PC-3 (cell line): ENCODE measurements at regions of chr3 and their contacts with region 1.

Region 1: GRCh38 chr3:106635271-106635670 is 742.0 kb upstream of the CCDC54 start:
- DNase-seq: peak; percentile 37
- ATAC-seq: no peak
- H3K4me3 ChIP-seq: no peak overlapping the region
- H3K27ac ChIP-seq: no peak overlapping the region
- H3K4me1 ChIP-seq: no peaks in the 10 kb centered on the region
- H3K27me3 ChIP-seq: no peaks in the 10 kb centered on the region
- CTCF ChIP-seq: no peak

Region 2: GRCh38 chr3:106728315-106729098 is 93.2 kb after region 1 on chr3:
- CTCF ChIA-PET with region 1: no interaction called
- POLR2A ChIA-PET with region 1: no interaction called
- intact Hi-C with region 1: loop called (anchors 10 kb)
- DNase-seq: peak; percentile 98
- ATAC-seq: peak; percentile 98
- H3K4me3 ChIP-seq: peak overlapping the region; percentile 55
- H3K27ac ChIP-seq: peak overlapping the region; percentile 75
- H3K4me1 ChIP-seq: peaks cover 27% of the 10 kb centered on the region
- H3K27me3 ChIP-seq: no peaks in the 10 kb centered on the region
- CTCF ChIP-seq: no peak

Region 3: DNA sequence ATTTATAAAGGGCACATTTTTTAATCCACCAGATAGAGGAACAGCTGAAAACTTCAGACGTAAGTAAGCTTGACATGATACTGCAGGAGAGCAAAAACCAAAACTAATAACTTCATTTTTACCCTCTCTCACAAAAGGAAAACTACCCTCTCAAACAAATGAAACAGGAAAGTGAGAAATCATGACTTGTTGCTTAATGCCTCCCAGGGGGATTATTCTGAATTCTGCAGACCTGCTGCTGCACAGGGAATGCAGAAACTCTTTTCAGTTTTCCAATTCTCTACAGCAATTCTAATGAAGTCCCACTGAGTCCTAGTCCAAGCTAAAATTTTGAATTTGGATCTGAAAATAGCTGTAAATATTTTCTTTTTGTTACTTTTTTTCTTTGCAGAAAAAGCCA is 104.8 kb after region 1 on chr3:
- CTCF ChIA-PET with region 1: no interaction called
- POLR2A ChIA-PET with region 1: no interaction called
- intact Hi-C with region 1: no loop called
- DNase-seq: no peak
- ATAC-seq: no peak
- H3K4me3 ChIP-seq: no peak overlapping the region
- H3K27ac ChIP-seq: no peak overlapping the region
- H3K4me1 ChIP-seq: no peaks in the 10 kb centered on the region
- H3K27me3 ChIP-seq: no peaks in the 10 kb centered on the region
- CTCF ChIP-seq: no peak